ENCODE measurements at regions of chr10 and their contacts with region 1.

Region 1: DNA sequence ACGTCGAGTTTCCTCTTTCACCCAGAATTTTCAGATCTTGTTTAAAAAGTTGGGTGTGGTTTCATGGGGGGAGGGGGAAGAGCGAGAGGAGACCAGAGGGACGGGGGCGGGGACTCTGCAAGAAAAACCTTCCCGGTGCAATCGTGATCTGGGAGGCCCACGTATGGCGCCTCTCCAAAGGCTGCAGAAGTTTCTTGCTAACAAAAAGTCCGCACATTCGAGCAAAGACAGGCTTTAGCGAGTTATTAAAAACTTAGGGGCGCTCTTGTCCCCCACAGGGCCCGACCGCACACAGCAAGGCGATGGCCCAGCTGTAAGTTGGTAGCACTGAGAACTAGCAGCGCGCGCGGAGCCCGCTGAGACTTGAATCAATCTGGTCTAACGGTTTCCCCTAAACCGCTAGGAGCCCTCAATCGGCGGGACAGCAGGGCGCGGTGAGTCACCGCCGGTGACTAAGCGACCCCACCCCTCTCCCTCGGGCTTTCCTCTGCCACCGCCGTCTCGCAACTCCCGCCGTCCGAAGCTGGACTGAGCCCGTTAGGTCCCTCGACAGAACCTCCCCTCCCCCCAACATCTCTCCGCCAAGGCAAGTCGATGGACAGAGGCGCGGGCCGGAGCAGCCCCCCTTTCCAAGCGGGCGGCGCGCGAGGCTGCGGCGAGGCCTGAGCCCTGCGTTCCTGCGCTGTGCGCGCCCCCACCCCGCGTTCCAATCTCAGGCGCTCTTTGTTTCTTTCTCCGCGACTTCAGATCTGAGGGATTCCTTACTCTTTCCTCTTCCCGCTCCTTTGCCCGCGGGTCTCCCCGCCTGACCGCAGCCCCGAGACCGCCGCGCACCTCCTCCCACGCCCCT is at the start of gene VIM:
- DNase-seq: peak; percentile 90
- H3K4me3 Mint-ChIP-seq: peak within 1 kb of the TSS; percentile 95
- H3K27ac Mint-ChIP-seq: peak within 1 kb of the TSS; percentile 73
- H3K4me1 Mint-ChIP-seq: peaks cover 9% of the 10 kb centered on the region
- H3K27me3 Mint-ChIP-seq: no peaks in the 10 kb centered on the region
- CTCF ChIP-seq: no peak
- total RNA-seq, gene VIM: 318 and 486 TPM in 2 replicates

Region 2: GRCh38 chr10:17216217-17216900 is 12.0 kb before region 1 on chr10:
- CTCF ChIA-PET with region 1: interaction called, 9 read pairs
- intact Hi-C with region 1: loop called (anchors 1 kb)
- DNase-seq: peak; percentile 58
- H3K4me3 Mint-ChIP-seq: peak overlapping the region; percentile 26
- H3K27ac Mint-ChIP-seq: peak overlapping the region; percentile 99
- H3K4me1 Mint-ChIP-seq: peaks cover 48% of the 10 kb centered on the region
- H3K27me3 Mint-ChIP-seq: no peaks in the 10 kb centered on the region
- CTCF ChIP-seq: no peak